ENCODE measurements at regions of chr5 and their contacts with region 1.

Region 1: GRCh38 chr5:73770172-73771025 is 144.4 kb downstream of the ARHGEF28 start:
- DNase-seq: peak; percentile 71
- ATAC-seq: peak; percentile 91
- H3K4me3 ChIP-seq: no peak overlapping the region
- H3K27ac ChIP-seq: peak overlapping the region; percentile 71
- H3K4me1 ChIP-seq: peaks cover 7% of the 10 kb centered on the region
- H3K27me3 ChIP-seq: no peaks in the 10 kb centered on the region
- CTCF ChIP-seq: no peak
- POLR2A ChIP-seq: no peak
- RAD21 ChIP-seq: no peak

Region 2: GRCh38 chr5:73448463-73449136 is 321.8 kb before region 1 on chr5 and contains the start of gene FOXD1:
- CTCF ChIA-PET with region 1: no interaction called
- POLR2A ChIA-PET with region 1: no interaction called
- dilution Hi-C with region 1: no loop called
- in situ Hi-C with region 1: no loop called
- intact Hi-C with region 1: no loop called
- DNase-seq: peak; percentile 97
- ATAC-seq: peak; percentile 82
- H3K4me3 ChIP-seq: peak within 1 kb of the TSS; percentile 94
- H3K27ac ChIP-seq: peak within 1 kb of the TSS; percentile 97
- H3K4me1 ChIP-seq: peaks cover 7% of the 10 kb centered on the region; the same call in 1 of the 2 replicates
- H3K27me3 ChIP-seq: peaks cover 8% of the 10 kb centered on the region
- CTCF ChIP-seq: 0 out of 2 replicates have a peak, but pooled peaks have one; percentile 1
- POLR2A ChIP-seq: peak; percentile 94
- RAD21 ChIP-seq: peak; percentile 18; the same call in 1 of the 2 replicates
- total RNA-seq, gene FOXD1: 3.2 and 6.4 TPM in 2 replicates

Region 3: GRCh38 chr5:73540192-73540591 is 230.2 kb before region 1 on chr5:
- CTCF ChIA-PET with region 1: no interaction called
- POLR2A ChIA-PET with region 1: no interaction called
- dilution Hi-C with region 1: no loop called
- in situ Hi-C with region 1: no loop called
- intact Hi-C with region 1: no loop called
- DNase-seq: peak; percentile 90
- ATAC-seq: peak; percentile 77
- H3K4me3 ChIP-seq: no peak overlapping the region
- H3K27ac ChIP-seq: no peak overlapping the region
- H3K4me1 ChIP-seq: peaks cover 14% of the 10 kb centered on the region
- H3K27me3 ChIP-seq: no peaks in the 10 kb centered on the region
- CTCF ChIP-seq: no peak
- POLR2A ChIP-seq: no peak
- RAD21 ChIP-seq: no peak

Region 4: DNA sequence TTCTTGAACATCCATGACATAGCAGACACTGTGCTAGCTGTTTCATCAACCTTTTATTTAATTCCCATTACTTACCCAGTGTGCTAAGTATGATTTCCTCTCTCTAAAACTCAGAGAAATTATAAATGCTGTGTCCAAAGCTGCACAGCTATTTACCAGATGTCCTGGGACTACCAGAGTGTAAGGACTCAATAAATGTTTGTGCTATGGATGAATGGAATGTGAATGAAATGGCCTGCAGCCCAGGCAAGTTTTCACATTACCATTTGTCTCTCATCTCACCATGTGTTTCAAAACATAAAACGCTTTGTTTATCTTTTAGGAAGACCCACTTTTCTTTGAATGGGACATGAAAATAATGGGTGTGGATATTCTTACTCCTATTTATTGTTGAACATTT is 48.2 kb before region 1 on chr5:
- CTCF ChIA-PET with region 1: no interaction called
- POLR2A ChIA-PET with region 1: no interaction called
- dilution Hi-C with region 1: no loop called
- in situ Hi-C with region 1: no loop called
- intact Hi-C with region 1: loop called (anchors 5 kb)
- DNase-seq: peak; percentile 60
- ATAC-seq: peak; percentile 85
- H3K4me3 ChIP-seq: no peak overlapping the region
- H3K27ac ChIP-seq: no peak overlapping the region
- H3K4me1 ChIP-seq: peaks cover 5% of the 10 kb centered on the region
- H3K27me3 ChIP-seq: no peaks in the 10 kb centered on the region
- CTCF ChIP-seq: no peak
- POLR2A ChIP-seq: no peak
- RAD21 ChIP-seq: no peak